Activated CD4-positive, alpha-beta T cell treated with anti-CD3 and anti-CD28 coated beads for 36 hours (primary cell): ENCODE measurements at regions of chr12 and their contacts with region 1.

Region 1: DNA sequence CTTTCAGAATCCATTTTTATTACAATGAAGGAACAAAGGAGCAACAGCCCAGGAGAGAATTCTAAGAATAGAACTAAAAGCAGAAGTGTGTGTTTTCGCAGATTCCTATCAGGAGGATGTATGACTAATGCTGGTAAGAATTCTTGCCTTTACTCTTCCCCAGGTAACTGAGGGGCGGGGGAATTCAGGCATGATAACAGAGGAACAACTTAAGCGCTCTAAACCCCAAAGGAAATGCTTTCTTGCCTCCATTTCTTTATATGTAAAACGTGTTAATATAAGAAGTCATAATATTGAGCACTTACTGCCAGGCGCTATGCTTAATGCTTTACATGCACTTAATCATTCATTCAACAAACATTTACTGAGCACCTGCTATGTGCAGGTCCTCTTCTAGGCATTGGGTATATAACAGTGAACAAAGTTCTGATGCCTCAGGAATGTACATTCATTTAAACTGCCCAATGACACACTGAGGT is 4.5 kb downstream of the HCAR1 start:
- DNase-seq: peak; percentile 36
- ATAC-seq: peak; percentile 48
- H3K4me3 Mint-ChIP-seq: peak overlapping the region; percentile 49
- H3K27ac Mint-ChIP-seq: peak overlapping the region; percentile 62
- H3K4me1 Mint-ChIP-seq: peaks cover 67% of the 10 kb centered on the region
- H3K27me3 Mint-ChIP-seq: no peaks in the 10 kb centered on the region

Region 2: GRCh38 chr12:122097927-122098756 is 628.0 kb before region 1 on chr12:
- CTCF ChIA-PET with region 1: no interaction called
- POLR2A ChIA-PET with region 1: no interaction called
- intact Hi-C with region 1: loop called in 1 of 2 experiments (anchors 10 kb)
- DNase-seq: no peak
- ATAC-seq: peak; percentile 45
- H3K4me3 Mint-ChIP-seq: no peak overlapping the region
- H3K27ac Mint-ChIP-seq: peak overlapping the region; percentile 48
- H3K4me1 Mint-ChIP-seq: peaks cover 64% of the 10 kb centered on the region
- H3K27me3 Mint-ChIP-seq: no peaks in the 10 kb centered on the region

Region 3: GRCh38 chr12:122413516-122414404 is 312.4 kb before region 1 on chr12:
- CTCF ChIA-PET with region 1: no interaction called
- POLR2A ChIA-PET with region 1: no interaction called
- intact Hi-C with region 1: loop called in 1 of 2 experiments (anchors 5 kb)
- DNase-seq: no peak
- ATAC-seq: no peak
- H3K4me3 Mint-ChIP-seq: peak overlapping the region; percentile 69
- H3K27ac Mint-ChIP-seq: peak overlapping the region; percentile 99
- H3K4me1 Mint-ChIP-seq: peaks cover 54% of the 10 kb centered on the region
- H3K27me3 Mint-ChIP-seq: no peaks in the 10 kb centered on the region

Region 4: DNA sequence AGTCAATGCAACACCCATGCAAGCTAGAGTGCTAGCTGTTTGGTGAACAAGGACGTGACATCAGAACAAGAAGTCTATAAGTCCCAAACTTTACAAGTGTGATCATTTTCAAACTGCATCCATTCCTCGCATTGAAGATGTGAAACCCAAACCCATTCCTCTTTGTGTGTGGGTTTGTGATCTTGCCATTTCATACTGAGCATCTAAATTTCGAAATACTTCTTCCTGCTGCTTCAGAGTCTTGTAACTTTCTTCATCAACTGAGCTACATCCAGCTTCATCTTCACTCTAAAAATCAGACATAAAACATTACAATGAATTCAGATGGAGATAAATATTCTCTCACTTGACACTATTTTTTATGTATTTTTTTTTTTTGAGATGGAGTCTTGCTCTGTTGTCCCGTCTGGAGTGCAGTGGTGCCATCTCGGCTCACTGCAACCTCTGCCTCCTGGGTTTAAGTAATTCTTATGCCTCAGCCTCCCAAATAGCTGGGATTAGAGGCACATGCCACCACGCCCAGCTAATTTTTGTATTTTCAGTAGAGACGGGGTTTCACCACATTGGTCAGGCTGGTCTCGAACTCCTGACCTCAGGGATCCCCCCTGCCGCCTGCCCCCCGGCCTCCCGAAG is 220.6 kb before region 1 on chr12:
- CTCF ChIA-PET with region 1: no interaction called
- POLR2A ChIA-PET with region 1: no interaction called
- intact Hi-C with region 1: no loop called
- DNase-seq: no peak
- ATAC-seq: no peak
- H3K4me3 Mint-ChIP-seq: no peak overlapping the region
- H3K27ac Mint-ChIP-seq: no peak overlapping the region
- H3K4me1 Mint-ChIP-seq: peaks cover 15% of the 10 kb centered on the region
- H3K27me3 Mint-ChIP-seq: no peaks in the 10 kb centered on the region

Region 5: GRCh38 chr12:122517877-122518276 is 208.2 kb before region 1 on chr12:
- CTCF ChIA-PET with region 1: no interaction called
- POLR2A ChIA-PET with region 1: interaction called, 10 read pairs
- intact Hi-C with region 1: no loop called
- DNase-seq: no peak
- ATAC-seq: peak; percentile 52
- H3K4me3 Mint-ChIP-seq: no peak overlapping the region
- H3K27ac Mint-ChIP-seq: peak overlapping the region; percentile 78
- H3K4me1 Mint-ChIP-seq: peaks cover 54% of the 10 kb centered on the region
- H3K27me3 Mint-ChIP-seq: no peaks in the 10 kb centered on the region